Prostate gland (tissue), 2 donors: ENCODE measurements at regions of chrX and their contacts with region 1.

Region 1: DNA sequence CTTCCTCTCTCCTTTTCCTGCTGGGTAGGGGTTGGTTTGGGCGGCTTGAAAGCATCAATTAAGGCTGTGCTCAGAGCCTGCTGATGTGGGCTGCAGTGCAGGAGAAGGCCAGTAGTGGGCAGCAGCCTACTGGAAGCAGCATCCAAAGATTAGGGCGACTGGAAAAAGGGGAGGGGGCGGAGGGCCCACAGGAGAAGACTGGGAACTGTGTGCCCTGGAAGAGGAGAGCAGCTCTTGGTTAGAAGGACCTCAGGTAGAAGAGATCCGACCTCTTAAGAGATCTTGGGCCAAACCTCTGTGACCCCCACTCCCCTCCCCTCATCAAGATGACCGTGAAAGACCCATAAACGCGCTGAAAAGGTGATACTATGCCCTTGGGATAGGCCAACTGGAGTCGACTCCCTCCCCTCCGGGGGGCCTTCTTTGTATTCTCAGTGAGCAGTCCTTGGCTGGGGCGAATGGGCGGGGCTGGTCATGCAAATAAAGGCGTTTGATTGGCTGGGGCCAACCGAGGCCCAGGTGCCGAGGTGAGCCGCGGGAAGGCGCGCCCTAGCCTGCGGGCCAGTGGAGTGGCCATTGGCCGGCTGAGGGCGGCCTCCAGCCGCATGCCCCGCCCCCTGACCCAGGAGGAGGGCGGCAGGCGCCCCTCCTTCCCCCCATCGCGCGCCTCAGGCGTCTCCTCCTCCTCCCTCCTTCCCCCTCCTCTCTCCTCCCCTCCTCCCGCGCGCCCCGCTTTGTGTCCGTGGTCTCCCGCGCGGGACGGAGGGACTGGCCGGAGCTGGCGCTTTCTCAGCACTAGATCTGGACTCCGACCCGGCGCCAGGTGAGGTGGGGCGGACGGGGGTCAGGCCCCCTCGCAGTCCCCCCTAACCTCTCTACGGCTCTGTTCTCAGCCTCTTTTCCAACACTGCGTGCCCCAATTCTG is 10.1 kb downstream of the DLG3 start:
- DNase-seq: peak; percentile 81
- H3K4me3 ChIP-seq: peak overlapping the region; percentile 52 to 55
- H3K27ac ChIP-seq: peak overlapping the region; percentile 83 to 88
- H3K4me1 ChIP-seq: no peaks in the 10 kb centered on the region
- H3K27me3 ChIP-seq: no peaks in the 10 kb centered on the region
- CTCF ChIP-seq: peak; percentile 27 to 81 (median 66)
- POLR2A ChIP-seq: peak; percentile 20

Region 2: DNA sequence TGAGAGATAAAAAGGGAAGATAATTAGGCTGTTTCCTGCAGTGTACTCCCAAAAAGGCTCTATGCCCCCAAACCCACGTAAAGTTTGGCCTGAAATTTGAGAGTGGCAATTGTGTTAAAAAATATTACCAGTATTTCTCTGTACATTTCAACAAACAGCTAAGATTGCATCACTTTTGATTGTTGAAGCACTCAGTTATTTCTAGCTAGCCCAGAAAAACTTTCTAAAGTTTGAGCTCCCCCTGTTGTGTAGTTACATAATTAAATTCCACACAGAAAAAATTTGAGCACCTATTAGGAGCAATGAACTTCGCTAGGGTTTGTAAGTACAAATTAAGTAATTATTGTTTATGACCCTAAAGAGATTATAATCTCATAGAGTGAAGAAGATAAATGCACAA is 99.4 kb after region 1 on chrX:
- intact Hi-C with region 1: loop called (anchors 5 kb)
- DNase-seq: no peak
- H3K4me3 ChIP-seq: no peak overlapping the region
- H3K27ac ChIP-seq: no peak overlapping the region
- H3K4me1 ChIP-seq: no peaks in the 10 kb centered on the region
- H3K27me3 ChIP-seq: no peaks in the 10 kb centered on the region
- CTCF ChIP-seq: peak in 2 of 4 experiments; percentile 30 to 56
- POLR2A ChIP-seq: no peak

Region 3: GRCh38 chrX:70664726-70665125 is 210.0 kb after region 1 on chrX:
- intact Hi-C with region 1: loop called (anchors 10 kb)
- DNase-seq: no peak
- H3K4me3 ChIP-seq: no peak overlapping the region
- H3K27ac ChIP-seq: no peak overlapping the region
- H3K4me1 ChIP-seq: no peaks in the 10 kb centered on the region
- H3K27me3 ChIP-seq: no peaks in the 10 kb centered on the region
- CTCF ChIP-seq: peak in 1 of 4 experiments; percentile 30
- POLR2A ChIP-seq: no peak